Activated CD8-positive, alpha-beta T cell treated with anti-CD3 and anti-CD28 coated beads for 36 hours (primary cell): ENCODE measurements at regions of chr1 and their contacts with region 1.

Region 1: DNA sequence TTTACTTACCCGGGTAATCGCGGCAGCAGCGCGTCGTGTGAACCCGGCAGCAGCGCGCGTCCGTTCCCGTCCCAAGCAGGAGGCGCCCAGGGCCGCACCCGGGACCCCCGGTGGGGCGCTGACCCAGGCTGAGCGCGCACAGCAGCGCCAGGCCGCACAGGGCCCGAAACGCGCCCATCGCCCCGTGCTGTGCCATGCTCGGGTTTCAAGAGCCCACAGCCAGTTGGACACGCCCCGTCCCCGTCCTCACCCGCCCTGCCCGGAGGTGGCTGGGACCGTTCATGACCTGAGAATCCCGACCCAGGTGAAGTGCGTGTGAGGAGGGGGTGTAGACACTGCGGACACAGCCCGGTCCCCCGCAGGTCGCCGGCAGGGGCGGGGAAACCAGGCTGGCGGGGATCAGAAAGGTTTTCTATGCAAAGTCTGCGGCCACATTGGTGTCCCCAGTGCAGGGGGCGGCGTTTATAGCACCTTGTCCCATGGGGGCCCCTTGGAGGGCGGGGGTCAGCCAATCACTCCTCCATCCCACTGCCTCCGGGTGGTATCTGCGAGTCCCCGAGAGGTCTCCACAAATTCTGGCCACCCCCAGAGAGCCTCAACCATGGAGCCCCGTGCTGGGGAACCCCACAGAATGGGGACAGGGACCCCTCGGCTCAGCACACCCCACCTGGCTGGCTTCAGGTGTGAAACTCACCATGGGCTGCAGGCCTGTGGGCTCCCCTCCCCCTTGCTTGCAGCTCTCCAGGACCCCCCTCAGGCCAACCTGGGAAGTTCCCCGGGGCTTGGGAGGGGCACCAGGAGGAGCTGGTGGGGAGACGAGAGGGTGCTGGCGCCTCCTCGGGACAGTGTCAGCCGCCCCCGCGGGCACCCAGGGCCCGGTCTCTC is at the start of gene TNFRSF18:
- DNase-seq: peak; percentile 70
- ATAC-seq: peak; percentile 11
- H3K4me3 Mint-ChIP-seq: peak within 1 kb of the TSS; percentile 79
- H3K27ac Mint-ChIP-seq: peak within 1 kb of the TSS; percentile 98
- H3K4me1 Mint-ChIP-seq: peaks cover 31% of the 10 kb centered on the region
- H3K27me3 Mint-ChIP-seq: no peaks in the 10 kb centered on the region
- CTCF ChIP-seq: no peak
- total RNA-seq, gene TNFRSF18: 126 to 135 TPM

Region 2: DNA sequence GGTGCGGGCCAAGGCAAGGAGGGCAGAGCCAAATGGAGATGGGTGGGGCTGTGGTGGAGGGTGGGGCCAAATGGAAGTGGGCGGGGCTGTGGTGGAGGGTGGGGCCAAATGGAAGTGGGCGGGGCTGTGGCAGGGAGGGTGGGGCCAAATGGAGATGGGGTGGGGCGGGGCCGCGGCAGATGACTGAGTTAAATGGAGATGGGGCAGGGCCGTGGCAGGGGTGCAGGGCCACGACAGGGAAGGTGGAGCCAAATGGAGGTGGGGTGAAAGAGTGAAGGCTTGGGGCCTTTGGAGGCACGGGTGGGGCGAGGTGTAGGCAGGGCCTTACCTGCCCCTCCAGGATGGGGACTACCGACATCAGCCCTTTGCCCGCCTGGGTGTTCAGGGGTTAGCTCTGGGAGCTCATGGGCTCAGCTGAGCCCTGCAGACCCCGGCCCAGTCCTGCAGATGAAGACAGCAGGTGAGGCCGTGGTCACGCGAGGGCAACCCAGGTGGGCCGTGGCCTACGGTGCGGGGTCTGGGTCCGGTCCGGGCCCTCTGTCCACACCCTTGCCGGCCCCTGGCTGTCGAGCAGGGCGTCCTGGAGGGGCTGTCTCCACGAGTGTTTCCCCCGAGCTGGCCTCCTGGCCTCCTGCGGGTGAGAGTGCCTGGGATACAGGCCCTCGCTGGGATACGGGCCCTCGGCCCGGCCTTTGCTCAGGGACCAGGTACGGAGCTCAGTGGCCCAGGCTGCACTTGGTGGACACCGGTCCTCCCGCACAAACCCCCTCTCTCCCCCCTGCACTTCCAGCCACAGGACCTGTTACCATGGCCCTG is 114.7 kb before region 1 on chr1:
- CTCF ChIA-PET with region 1: no interaction called
- POLR2A ChIA-PET with region 1: no interaction called
- intact Hi-C with region 1: no loop called
- DNase-seq: peak; percentile 50
- ATAC-seq: peak; percentile 65
- H3K4me3 Mint-ChIP-seq: no peak overlapping the region
- H3K27ac Mint-ChIP-seq: no peak overlapping the region
- H3K4me1 Mint-ChIP-seq: peaks cover 6% of the 10 kb centered on the region
- H3K27me3 Mint-ChIP-seq: no peaks in the 10 kb centered on the region
- CTCF ChIP-seq: no peak

Region 3: DNA sequence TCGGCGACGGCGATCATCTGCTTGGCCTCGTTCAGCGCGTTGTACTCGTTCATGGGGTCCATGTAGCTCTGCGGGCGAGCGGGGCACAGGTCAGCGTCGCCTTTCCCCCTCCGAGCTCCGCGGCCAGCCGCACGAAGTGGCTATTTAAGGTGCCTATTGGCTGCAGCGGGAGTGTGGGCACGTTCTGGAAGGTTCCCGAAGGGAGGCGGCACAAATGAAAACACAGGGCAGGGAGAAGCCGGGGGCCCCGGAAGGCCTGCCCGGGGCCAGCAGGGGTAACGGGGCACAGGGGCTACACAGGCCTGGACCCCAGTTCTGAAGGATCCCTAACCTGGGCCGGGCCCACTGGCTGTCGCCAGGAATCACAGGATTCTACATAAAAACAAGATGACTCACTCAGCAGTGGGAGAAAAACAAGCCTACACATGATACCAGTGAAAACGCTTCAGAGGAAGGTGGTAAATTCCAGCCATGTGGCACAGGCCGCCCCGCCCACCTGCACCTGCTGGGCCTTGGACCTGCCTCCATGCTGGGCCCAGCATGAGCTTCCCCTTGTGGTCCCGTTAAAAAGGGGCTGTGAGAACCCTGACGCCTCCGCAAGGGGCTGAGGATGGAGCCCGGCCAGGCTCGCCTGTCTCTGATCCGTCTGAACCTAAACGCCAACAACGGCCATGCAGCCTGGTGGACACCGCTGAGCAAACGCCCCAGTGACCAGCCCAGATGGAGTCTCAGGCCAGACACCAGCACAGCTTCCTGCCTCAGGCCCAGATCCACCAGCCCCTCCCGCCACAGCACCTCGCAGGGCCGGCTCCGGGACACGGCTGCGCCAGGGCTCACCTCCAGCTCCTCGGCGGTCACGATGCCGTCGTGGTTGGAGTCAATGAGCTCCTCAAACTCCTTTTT is 11.3 kb after region 1 on chr1:
- CTCF ChIA-PET with region 1: no interaction called
- POLR2A ChIA-PET with region 1: interaction called, 18 read pairs
- intact Hi-C with region 1: no loop called
- DNase-seq: peak; percentile 47
- ATAC-seq: no peak
- H3K4me3 Mint-ChIP-seq: no peak overlapping the region
- H3K27ac Mint-ChIP-seq: peak overlapping the region; percentile 76
- H3K4me1 Mint-ChIP-seq: peaks cover 44% of the 10 kb centered on the region
- H3K27me3 Mint-ChIP-seq: no peaks in the 10 kb centered on the region
- CTCF ChIP-seq: no peak